ENCODE measurements at regions of chr2 and their contacts with region 1.

Region 1: GRCh38 chr2:70104231-70105111 is 17.2 kb downstream of the PCBP1 start:
- DNase-seq: peak; percentile 73 to 90 (median 77)
- ATAC-seq: peak; percentile 63
- H3K4me3 ChIP-seq: peak overlapping the region; percentile 17; the same call in 1 of the 2 replicates
- H3K27ac ChIP-seq: peak overlapping the region; percentile 75
- H3K4me1 ChIP-seq: peaks cover 39 to 46% of the 10 kb centered on the region in 2 experiments
- H3K27me3 ChIP-seq: no peaks in the 10 kb centered on the region
- CTCF ChIP-seq: no peak
- EP300 ChIP-seq: peak; percentile 57; the same call in 1 of the 2 replicates
- POLR2A ChIP-seq: peak; percentile 54; the same call in 1 of the 2 replicates
- RAD21 ChIP-seq: peak in 1 of 2 experiments; percentile 23; a peak in 3 of 4 replicates

Region 2: DNA sequence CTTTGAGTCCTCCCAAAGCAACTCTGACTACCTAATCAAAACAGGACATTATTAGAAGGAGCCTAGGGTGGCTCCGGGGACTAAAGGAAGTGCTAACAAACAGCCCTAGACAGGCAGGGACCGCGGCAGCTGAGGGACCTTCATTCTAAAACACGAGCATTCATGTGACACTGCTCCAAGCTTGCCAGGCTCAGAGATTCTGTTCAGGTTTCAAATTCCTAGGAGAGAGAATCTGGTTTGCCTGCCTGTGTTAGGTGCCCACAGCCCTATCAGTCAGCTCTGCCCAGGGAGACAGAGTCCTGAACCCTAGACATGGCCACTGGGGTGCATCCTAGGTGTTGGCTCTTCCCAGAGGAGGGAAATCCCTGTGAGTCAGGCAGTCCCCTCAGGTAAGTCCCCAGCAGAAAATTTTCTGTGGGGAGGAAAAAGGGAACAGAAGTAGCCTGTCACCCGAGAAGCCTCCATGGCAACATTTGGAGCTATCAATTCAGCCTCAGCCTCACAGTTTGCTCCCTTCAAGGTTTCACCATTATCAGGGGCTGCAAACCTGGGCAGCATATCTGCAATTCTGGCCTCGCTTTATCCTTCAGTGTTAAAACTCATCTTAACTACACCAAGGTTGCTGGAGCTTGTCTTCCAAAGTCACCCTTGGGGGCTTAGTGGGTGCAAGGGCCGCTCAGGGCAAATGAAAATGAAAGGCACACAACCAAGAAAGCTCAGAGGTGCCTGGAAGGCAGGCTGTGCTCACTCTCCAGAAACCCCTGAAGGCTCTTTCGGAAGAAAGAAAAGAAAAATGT is 11.4 kb after region 1 on chr2:
- CTCF ChIA-PET with region 1: no interaction called
- POLR2A ChIA-PET with region 1: interaction called, 10 read pairs
- in situ Hi-C with region 1: no loop called
- intact Hi-C with region 1: no loop called
- DNase-seq: peak in 2 of 4 experiments; percentile 25 to 41
- ATAC-seq: peak; percentile 40
- H3K4me3 ChIP-seq: no peak overlapping the region
- H3K27ac ChIP-seq: peak overlapping the region; percentile 20
- H3K4me1 ChIP-seq: peaks cover 31 to 50% of the 10 kb centered on the region in 2 experiments
- H3K27me3 ChIP-seq: no peaks in the 10 kb centered on the region
- CTCF ChIP-seq: no peak
- EP300 ChIP-seq: no peak
- POLR2A ChIP-seq: no peak
- RAD21 ChIP-seq: no peak

Region 3: DNA sequence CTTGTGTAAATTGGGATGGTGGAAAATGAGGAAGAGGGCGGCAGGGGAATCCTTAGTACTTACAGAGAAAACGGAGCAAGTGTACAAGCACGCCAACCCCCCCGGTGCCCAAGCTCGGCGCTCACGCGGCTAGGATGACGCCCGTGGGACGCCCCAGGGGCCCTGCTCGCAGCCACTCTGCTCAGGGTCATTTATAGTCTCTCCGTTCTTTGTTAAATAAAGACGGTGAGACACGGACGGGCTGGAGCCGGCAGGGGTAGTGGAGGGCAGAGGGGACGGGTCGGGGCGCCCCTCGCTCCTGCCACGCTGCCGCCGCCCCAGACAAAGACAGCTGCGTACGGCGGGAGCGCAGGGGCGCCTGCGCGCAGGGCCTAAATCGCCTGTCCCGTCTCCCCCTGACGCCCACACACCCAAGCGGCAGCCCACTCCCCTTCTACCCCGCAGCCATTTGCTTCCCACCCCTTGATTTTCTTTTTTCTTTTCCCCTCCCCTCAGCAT is 20.6 kb after region 1 on chr2:
- CTCF ChIA-PET with region 1: no interaction called
- POLR2A ChIA-PET with region 1: interaction called, 20 read pairs
- in situ Hi-C with region 1: no loop called
- intact Hi-C with region 1: loop called (anchors 2 kb)
- DNase-seq: peak; percentile 62 to 69 (median 64)
- ATAC-seq: peak; percentile 59
- H3K4me3 ChIP-seq: peak overlapping the region; percentile 61
- H3K27ac ChIP-seq: peak overlapping the region; percentile 100
- H3K4me1 ChIP-seq: peaks cover 48 to 52% of the 10 kb centered on the region in 2 experiments
- H3K27me3 ChIP-seq: no peaks in the 10 kb centered on the region
- CTCF ChIP-seq: no peak
- EP300 ChIP-seq: no peak
- POLR2A ChIP-seq: no peak
- RAD21 ChIP-seq: no peak

Region 4: DNA sequence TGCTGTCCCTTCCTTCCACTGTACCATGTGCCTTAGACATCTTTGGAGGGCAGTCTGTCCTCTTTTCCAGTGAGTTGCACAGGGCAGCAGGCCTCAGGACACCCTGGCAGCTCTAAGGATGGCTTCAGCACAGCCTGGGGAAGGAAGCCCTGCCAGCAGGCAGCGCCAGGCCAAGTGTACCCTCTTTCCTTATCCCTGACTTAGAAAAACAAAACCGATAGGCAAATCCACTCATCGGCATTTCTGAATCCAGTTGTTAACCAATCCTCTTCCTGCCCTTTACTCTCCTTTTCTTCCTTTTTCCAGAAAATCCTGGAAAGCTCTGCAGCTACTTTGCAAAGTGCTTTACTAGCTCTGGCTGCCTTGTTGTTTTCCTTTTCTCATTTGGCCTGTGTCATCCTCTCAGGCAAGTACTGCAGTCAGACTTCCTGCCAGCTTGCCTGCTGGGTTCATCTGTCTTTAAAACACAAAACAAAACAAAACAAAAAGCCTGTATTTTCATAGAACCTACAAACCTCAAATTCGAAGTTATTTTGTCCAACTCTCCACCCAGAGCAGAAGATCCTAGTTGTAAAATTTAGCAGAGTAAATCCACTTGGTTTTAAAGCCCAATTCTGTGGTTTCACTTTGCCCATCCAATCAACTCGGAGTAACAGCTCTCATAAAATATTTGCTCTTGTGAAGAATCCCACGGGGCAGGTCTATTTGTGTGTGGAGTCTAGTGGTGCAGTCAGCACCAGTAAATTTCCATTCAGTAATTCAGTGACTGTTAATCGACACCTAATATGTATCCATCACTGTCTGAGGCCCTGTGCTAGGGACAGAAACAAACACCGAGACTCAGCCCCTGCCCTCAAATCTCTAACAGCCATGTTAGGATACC is 28.0 kb after region 1 on chr2:
- CTCF ChIA-PET with region 1: no interaction called
- POLR2A ChIA-PET with region 1: interaction called, 10 read pairs
- in situ Hi-C with region 1: no loop called
- intact Hi-C with region 1: loop called (anchors 2 kb)
- DNase-seq: peak in 1 of 4 experiments; percentile 64
- ATAC-seq: peak; percentile 47
- H3K4me3 ChIP-seq: peak overlapping the region; percentile 2; the same call in 1 of the 2 replicates
- H3K27ac ChIP-seq: peak overlapping the region; percentile 95
- H3K4me1 ChIP-seq: peaks cover 33 to 62% of the 10 kb centered on the region in 2 experiments
- H3K27me3 ChIP-seq: no peaks in the 10 kb centered on the region
- CTCF ChIP-seq: no peak
- EP300 ChIP-seq: no peak
- POLR2A ChIP-seq: peak; percentile 62
- RAD21 ChIP-seq: no peak

Region 5: GRCh38 chr2:70173520-70173919 is 69.0 kb after region 1 on chr2:
- CTCF ChIA-PET with region 1: no interaction called
- POLR2A ChIA-PET with region 1: no interaction called
- in situ Hi-C with region 1: no loop called
- intact Hi-C with region 1: no loop called
- DNase-seq: no peak
- ATAC-seq: no peak
- H3K4me3 ChIP-seq: no peak overlapping the region
- H3K27ac ChIP-seq: no peak overlapping the region
- H3K4me1 ChIP-seq: peaks cover 8 to 10% of the 10 kb centered on the region in 2 experiments; a peak in 4 of 5 replicates
- H3K27me3 ChIP-seq: no peaks in the 10 kb centered on the region
- CTCF ChIP-seq: no peak
- EP300 ChIP-seq: no peak
- POLR2A ChIP-seq: no peak
- RAD21 ChIP-seq: no peak

Measured in K562 (cell line).